A549 (cell line): ENCODE measurements at regions of chr9 and their contacts with region 1.

Region 1: DNA sequence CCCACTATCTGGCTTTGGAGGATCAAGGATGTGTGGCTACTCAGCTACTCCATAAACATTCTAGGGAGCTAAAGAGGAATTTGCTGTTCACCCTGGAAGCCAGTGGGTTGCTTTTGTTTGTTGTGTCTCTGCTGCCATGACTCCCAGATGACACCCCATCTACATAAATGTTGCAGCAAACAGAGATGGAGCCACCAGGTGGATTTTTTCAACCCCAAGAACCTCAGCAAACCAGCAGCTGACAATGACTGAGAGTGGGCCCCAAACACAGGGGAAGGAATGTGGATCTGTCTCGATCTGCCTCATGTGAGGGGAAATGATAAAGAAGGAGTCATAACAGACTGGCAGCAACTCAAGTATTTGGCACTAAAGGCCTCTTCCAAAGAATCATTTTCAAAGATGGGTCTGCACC is 132.7 kb upstream of the TNC start:
- DNase-seq: no peak
- ATAC-seq: no peak
- H3K4me3 ChIP-seq: no peak overlapping the region
- H3K27ac ChIP-seq: no peak overlapping the region
- H3K4me1 ChIP-seq: no peaks in the 10 kb centered on the region
- CTCF ChIP-seq: no peak
- EP300 ChIP-seq: no peak
- POLR2A ChIP-seq: no peak
- RAD21 ChIP-seq: no peak

Region 2: GRCh38 chr9:115237385-115237998 is 13.1 kb before region 1 on chr9:
- CTCF ChIA-PET with region 1: interaction called, 10 read pairs
- POLR2A ChIA-PET with region 1: no interaction called
- DNase-seq: no peak
- ATAC-seq: no peak
- H3K4me3 ChIP-seq: no peak overlapping the region
- H3K27ac ChIP-seq: peak overlapping the region in 1 of 2 experiments; percentile 40; a peak in 2 of 6 replicates
- H3K4me1 ChIP-seq: peaks cover 22% of the 10 kb centered on the region
- CTCF ChIP-seq: no peak
- EP300 ChIP-seq: no peak
- POLR2A ChIP-seq: no peak
- RAD21 ChIP-seq: no peak